Activated CD4-positive, alpha-beta T cell treated with anti-CD3 and anti-CD28 coated beads, Interleukin-2, amount 10 ng/mL, durations not matched to agents 7 days and 5 days (primary cell): ENCODE measurements at regions of chr1 and their contacts with region 1.

Region 1: DNA sequence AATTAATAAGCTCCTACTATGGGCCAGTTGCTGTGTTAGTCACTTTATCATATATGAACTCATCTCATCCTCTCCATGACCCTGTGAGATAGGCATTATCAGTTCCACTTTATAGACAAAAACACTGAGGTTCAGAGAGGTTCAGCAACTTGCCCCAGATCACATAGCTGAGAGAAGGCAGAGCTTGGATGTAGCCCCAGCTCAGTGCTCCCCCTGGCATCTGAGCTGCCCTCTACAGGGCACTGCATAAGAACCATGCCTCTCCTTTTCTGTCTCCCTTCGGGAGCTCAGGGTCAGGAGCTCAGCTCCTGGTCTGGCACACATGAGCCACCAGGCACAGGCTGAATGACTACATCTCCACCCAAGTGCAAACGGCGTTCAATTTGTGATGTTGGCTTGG is 16.9 kb downstream of the RAB7B start:
- DNase-seq: no peak
- H3K4me3 Mint-ChIP-seq: no peak overlapping the region
- H3K27ac Mint-ChIP-seq: no peak overlapping the region
- H3K4me1 Mint-ChIP-seq: no peaks in the 10 kb centered on the region
- H3K27me3 Mint-ChIP-seq: no peaks in the 10 kb centered on the region

Region 2: GRCh38 chr1:206001476-206001888 is 15.2 kb after region 1 on chr1:
- CTCF ChIA-PET with region 1: interaction called, 14 read pairs
- POLR2A ChIA-PET with region 1: no interaction called
- DNase-seq: no peak
- H3K4me3 Mint-ChIP-seq: no peak overlapping the region
- H3K27ac Mint-ChIP-seq: no peak overlapping the region
- H3K4me1 Mint-ChIP-seq: peaks cover 4% of the 10 kb centered on the region
- H3K27me3 Mint-ChIP-seq: peaks cover 1% of the 10 kb centered on the region